Right cardiac atrium (tissue), 5 donors: ENCODE measurements at regions of chr12 and their contacts with region 1.

Region 1: GRCh38 chr12:4526923-4527546 is 11.7 kb upstream of the RAD51AP1 start:
- DNase-seq: no peak
- ATAC-seq: no peak
- H3K4me3 ChIP-seq: no peak overlapping the region
- H3K27ac ChIP-seq: no peak overlapping the region
- H3K4me1 ChIP-seq: no peaks in the 10 kb centered on the region
- H3K27me3 ChIP-seq: no peaks in the 10 kb centered on the region

Region 2: DNA sequence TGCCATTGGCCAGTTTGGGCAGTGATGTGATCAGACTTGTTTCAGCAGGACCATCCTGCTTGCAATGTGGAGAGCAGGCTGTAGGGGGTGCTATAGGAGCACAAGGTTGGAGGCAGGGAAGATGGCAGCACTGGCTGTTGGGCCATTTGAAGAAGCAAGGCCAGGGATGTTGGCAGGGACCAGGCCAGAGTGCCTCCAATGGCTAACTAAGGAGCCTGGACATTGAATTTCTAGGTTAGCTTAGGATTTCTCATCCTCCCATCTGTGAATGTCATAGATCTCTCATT is 171.1 kb before region 1 on chr12:
- intact Hi-C with region 1: loop called in 1 of 4 experiments (anchors 10 kb)
- DNase-seq: peak in 2 of 3 donors; percentile 15 to 58
- ATAC-seq: peak in 1 of 2 donors; percentile 29
- H3K4me3 ChIP-seq: no peak overlapping the region
- H3K27ac ChIP-seq: peak overlapping the region; percentile 80
- H3K4me1 ChIP-seq: peaks cover 5% of the 10 kb centered on the region
- H3K27me3 ChIP-seq: no peaks in the 10 kb centered on the region

Region 3: DNA sequence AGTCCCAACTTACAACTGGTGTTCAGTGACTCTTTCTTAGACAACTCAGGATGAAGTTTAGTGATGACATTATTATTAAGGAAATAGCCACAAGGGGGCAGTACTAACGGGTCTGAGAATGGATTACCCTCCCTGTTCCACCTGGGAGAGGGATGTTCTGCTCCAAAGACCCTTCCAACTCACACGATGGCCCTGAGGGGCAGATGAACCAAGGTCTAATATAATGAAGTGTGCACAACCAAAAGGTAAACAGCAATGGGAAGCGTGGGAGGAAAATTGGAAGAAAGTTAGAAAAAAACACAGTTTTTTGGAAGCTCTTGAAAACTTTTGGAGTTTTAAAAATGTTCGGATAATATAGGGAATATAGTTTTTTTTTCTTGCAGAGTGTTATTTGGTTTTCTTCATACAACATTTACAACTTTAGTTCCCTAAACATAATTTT is 105.4 kb before region 1 on chr12:
- intact Hi-C with region 1: loop called in 1 of 4 experiments (anchors 10 kb)
- DNase-seq: no peak
- ATAC-seq: no peak
- H3K4me3 ChIP-seq: no peak overlapping the region
- H3K27ac ChIP-seq: no peak overlapping the region
- H3K4me1 ChIP-seq: no peaks in the 10 kb centered on the region
- H3K27me3 ChIP-seq: no peaks in the 10 kb centered on the region